Activated CD8-positive, alpha-beta T cell treated with anti-CD3 and anti-CD28 coated beads, Interleukin-2, amount 10 ng/mL, durations not matched to agents 7 days and 5 days (primary cell): ENCODE measurements at regions of chr17 and their contacts with region 1.

Region 1: GRCh38 chr17:75827252-75828115 is 16.7 kb downstream of the UNC13D start:
- DNase-seq: peak; percentile 77
- ATAC-seq: peak; percentile 71
- H3K4me3 Mint-ChIP-seq: peak overlapping the region; percentile 63
- H3K27ac Mint-ChIP-seq: peak overlapping the region; percentile 99
- H3K4me1 Mint-ChIP-seq: peaks cover 41% of the 10 kb centered on the region
- H3K27me3 Mint-ChIP-seq: no peaks in the 10 kb centered on the region

Region 2: GRCh38 chr17:75667021-75667790 is 160.3 kb before region 1 on chr17 and contains the starts of genes RECQL5 and SAP30BP:
- CTCF ChIA-PET with region 1: no interaction called
- POLR2A ChIA-PET with region 1: no interaction called
- DNase-seq: peak; percentile 99
- ATAC-seq: peak; percentile 100
- H3K4me3 Mint-ChIP-seq: peak within 1 kb of the TSS; percentile 63
- H3K27ac Mint-ChIP-seq: peak within 1 kb of the TSS; percentile 79
- H3K4me1 Mint-ChIP-seq: peaks cover 31% of the 10 kb centered on the region
- H3K27me3 Mint-ChIP-seq: no peaks in the 10 kb centered on the region
- total RNA-seq, gene RECQL5: 37.6 to 43.9 TPM
- total RNA-seq, gene SAP30BP: 88.7 to 93.7 TPM

Region 3: GRCh38 chr17:75697651-75698291 is 129.7 kb before region 1 on chr17:
- CTCF ChIA-PET with region 1: no interaction called
- POLR2A ChIA-PET with region 1: no interaction called
- DNase-seq: no peak
- ATAC-seq: no peak
- H3K4me3 Mint-ChIP-seq: no peak overlapping the region
- H3K27ac Mint-ChIP-seq: peak overlapping the region; percentile 31
- H3K4me1 Mint-ChIP-seq: no peaks in the 10 kb centered on the region
- H3K27me3 Mint-ChIP-seq: no peaks in the 10 kb centered on the region

Region 4: DNA sequence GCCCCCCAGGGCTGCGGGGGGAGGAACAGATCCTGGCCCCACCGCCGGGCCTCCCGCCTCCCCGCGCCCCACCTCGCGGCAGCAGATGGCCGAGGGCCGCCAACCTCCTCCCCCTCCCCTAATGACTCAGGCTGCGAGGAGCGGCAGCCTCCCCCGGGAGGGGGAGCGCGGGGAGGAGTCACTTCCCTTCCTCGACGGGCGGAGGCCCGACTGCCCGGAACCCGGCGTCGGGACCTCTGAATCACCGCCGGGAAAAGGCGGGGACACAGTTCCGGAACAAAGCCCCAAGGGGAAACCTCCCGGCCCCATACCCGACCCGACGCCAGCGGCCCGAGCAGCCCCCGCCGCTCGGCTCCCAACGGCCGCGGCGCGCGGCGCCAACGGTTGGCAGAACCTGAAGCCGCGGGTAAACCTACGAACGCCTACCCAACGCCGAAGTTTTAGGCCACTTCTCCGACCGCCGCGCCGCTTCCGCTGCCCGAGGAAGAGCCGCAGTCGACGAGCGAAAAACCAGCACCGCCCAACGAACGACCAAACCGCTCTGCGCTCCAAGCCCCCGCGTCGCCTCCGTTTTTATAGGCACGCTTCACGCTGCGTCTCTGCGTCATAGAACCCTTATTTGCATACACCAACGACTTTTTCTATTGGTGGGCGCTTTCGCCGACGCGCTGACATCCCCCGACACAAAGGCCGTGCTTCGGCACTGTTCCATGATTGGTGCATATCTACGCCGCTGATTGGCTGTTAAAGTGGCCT is 48.1 kb before region 1 on chr17:
- CTCF ChIA-PET with region 1: interaction called, 14 read pairs
- POLR2A ChIA-PET with region 1: interaction called, 205 read pairs
- DNase-seq: peak; percentile 97
- ATAC-seq: peak; percentile 70
- H3K4me3 Mint-ChIP-seq: peak overlapping the region; percentile 86
- H3K27ac Mint-ChIP-seq: peak overlapping the region; percentile 97
- H3K4me1 Mint-ChIP-seq: peaks cover 51% of the 10 kb centered on the region
- H3K27me3 Mint-ChIP-seq: peaks cover 3% of the 10 kb centered on the region

Region 5: GRCh38 chr17:75795820-75796607 is 31.5 kb before region 1 on chr17:
- CTCF ChIA-PET with region 1: interaction called, 10 read pairs
- POLR2A ChIA-PET with region 1: interaction called, 4 read pairs
- DNase-seq: no peak
- ATAC-seq: no peak
- H3K4me3 Mint-ChIP-seq: no peak overlapping the region
- H3K27ac Mint-ChIP-seq: no peak overlapping the region
- H3K4me1 Mint-ChIP-seq: peaks cover 31% of the 10 kb centered on the region
- H3K27me3 Mint-ChIP-seq: no peaks in the 10 kb centered on the region

Region 6: GRCh38 chr17:75845049-75845860 is 17.8 kb after region 1 on chr17:
- CTCF ChIA-PET with region 1: interaction called, 16 read pairs
- POLR2A ChIA-PET with region 1: interaction called, 33 read pairs
- DNase-seq: peak; percentile 74
- ATAC-seq: peak; percentile 49
- H3K4me3 Mint-ChIP-seq: peak overlapping the region; percentile 57
- H3K27ac Mint-ChIP-seq: peak overlapping the region; percentile 77
- H3K4me1 Mint-ChIP-seq: peaks cover 36% of the 10 kb centered on the region
- H3K27me3 Mint-ChIP-seq: no peaks in the 10 kb centered on the region